Right ventricle myocardium inferior (tissue), 1 donor: ENCODE measurements at regions of chr1 and their contacts with region 1.

Region 1: GRCh38 chr1:178294654-178295053 is 200.8 kb downstream of the RASAL2 start:
- DNase-seq: no peak
- ATAC-seq: no peak

Region 2: GRCh38 chr1:178048426-178048825 is 246.2 kb before region 1 on chr1:
- intact Hi-C with region 1: no loop called
- DNase-seq: no peak
- ATAC-seq: no peak

Region 3: GRCh38 chr1:178749581-178750166 is 455.0 kb after region 1 on chr1:
- intact Hi-C with region 1: loop called (anchors 10 kb)
- DNase-seq: no peak
- ATAC-seq: no peak